ENCODE measurements at regions of chr5 and their contacts with region 1.

Region 1: DNA sequence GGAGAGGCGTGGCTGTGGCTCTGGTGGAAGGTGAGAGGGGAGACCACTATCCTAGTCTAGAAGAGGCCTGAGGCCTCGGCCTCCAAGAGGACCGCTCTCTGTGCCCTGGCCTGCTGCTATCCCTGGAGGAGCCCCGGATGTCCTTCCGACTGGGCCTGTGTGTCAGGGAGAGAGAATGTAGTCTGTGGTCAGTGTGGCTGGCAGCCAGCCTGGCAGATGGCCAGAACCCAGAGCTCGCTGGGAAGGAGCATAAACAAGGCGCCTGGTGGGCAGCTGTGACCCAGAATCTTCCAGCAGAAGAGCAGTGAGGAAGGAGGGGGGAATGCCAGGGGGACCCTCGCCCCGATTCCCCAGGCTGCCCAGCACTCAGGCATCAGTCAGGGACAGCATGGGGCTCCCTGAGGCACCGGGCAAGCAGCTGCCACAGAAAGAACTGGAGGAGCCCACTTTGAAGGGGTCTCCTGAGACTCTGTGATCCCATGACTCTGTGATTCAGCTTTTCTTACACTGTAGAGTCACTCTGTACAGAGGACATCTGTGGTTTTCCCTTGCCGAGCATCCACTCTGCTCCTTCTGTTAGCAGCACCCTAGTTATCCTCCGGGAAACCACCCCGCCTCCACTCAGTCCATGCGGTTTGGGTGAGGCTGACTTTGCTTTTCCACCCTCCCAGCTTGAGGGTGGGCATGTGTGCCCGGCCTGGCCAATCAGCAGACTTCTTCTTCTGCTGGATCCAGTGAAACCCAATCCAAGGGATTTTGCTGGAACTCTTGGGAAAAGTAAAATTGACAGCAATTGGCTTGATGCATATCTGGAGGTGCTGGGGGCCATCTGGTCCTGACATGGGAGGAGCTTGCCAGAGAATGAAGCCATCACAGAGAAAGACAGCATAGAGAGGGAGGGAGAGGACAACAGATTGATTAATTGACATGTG is 46.2 kb upstream of the PWWP2A start:
- DNase-seq: peak; percentile 87 to 88
- H3K4me3 ChIP-seq: peak overlapping the region in 1 of 3 donors; percentile 51
- H3K27ac ChIP-seq: peak overlapping the region; percentile 83 to 96
- H3K4me1 ChIP-seq: peaks cover 3 to 13% of the 10 kb centered on the region in 2 donors
- H3K27me3 ChIP-seq: no peaks in the 10 kb centered on the region
- CTCF ChIP-seq: no peak
- POLR2A ChIP-seq: no peak

Region 2: GRCh38 chr5:160119142-160119904 is 46.1 kb before region 1 on chr5 and contains the start of gene PWWP2A:
- intact Hi-C with region 1: loop called (anchors 10 kb)
- DNase-seq: peak; percentile 99
- H3K4me3 ChIP-seq: peak within 1 kb of the TSS; percentile 90 to 98 (median 98)
- H3K27ac ChIP-seq: peak within 1 kb of the TSS; percentile 95 to 97
- H3K4me1 ChIP-seq: no peaks in the 10 kb centered on the region
- H3K27me3 ChIP-seq: no peaks in the 10 kb centered on the region
- CTCF ChIP-seq: no peak
- POLR2A ChIP-seq: peak; percentile 43
- total RNA-seq, gene PWWP2A: 29.8 to 45.8 (median 39.3) TPM

Measured in breast epithelium (tissue), 4 donors.